HCT116 (cell line): ENCODE measurements at regions of chr11 and their contacts with region 1.

Region 1: GRCh38 chr11:114340311-114341131 is 44.3 kb downstream of the NNMT start:
- DNase-seq: peak; percentile 51
- ATAC-seq: peak; percentile 92
- H3K4me3 ChIP-seq: peak overlapping the region in 1 of 2 experiments; percentile 6; a peak in 1 of 4 replicates
- H3K27ac ChIP-seq: no peak overlapping the region
- H3K4me1 ChIP-seq: peaks cover 0 to 4% of the 10 kb centered on the region in 2 experiments; a peak in 1 of 4 replicates
- H3K27me3 ChIP-seq: no peaks in the 10 kb centered on the region
- CTCF ChIP-seq: peak; percentile 59 to 78 (median 74); a peak in 5 of 6 replicates
- POLR2A ChIP-seq: no peak
- RAD21 ChIP-seq: peak; percentile 83

Region 2: GRCh38 chr11:114466742-114467141 is 126.2 kb after region 1 on chr11:
- CTCF ChIA-PET with region 1: no interaction called
- POLR2A ChIA-PET with region 1: interaction called, 3 read pairs
- RAD21 ChIA-PET with region 1: no interaction called
- intact Hi-C with region 1: loop called (anchors 10 kb)
- DNase-seq: no peak
- ATAC-seq: no peak
- H3K4me3 ChIP-seq: no peak overlapping the region
- H3K27ac ChIP-seq: no peak overlapping the region
- H3K4me1 ChIP-seq: peaks cover 0 to 3% of the 10 kb centered on the region in 2 experiments; a peak in 1 of 4 replicates
- H3K27me3 ChIP-seq: no peaks in the 10 kb centered on the region
- CTCF ChIP-seq: no peak
- POLR2A ChIP-seq: no peak
- RAD21 ChIP-seq: no peak

Region 3: DNA sequence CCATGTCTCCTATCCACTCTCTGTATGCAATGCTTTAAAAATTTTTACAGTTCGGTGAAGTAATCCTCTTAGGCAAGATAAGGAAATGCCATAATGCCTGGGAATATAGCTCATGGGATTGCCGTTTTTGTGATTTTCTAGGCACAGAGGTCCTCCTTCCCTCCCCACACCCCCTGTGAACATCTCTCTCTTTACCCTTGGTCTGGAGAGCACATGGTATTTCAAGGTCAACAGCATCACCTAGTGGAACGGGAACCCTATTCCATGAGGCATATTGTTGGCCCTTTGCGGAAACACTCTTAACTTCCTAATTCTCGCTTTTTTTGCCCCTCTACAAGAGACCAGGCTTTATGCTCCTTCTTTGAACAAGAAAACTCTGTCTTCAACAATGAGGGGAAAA is 246.3 kb after region 1 on chr11:
- CTCF ChIA-PET with region 1: no interaction called
- POLR2A ChIA-PET with region 1: no interaction called
- RAD21 ChIA-PET with region 1: no interaction called
- intact Hi-C with region 1: loop called (anchors 10 kb)
- DNase-seq: no peak
- ATAC-seq: no peak
- H3K4me3 ChIP-seq: no peak overlapping the region
- H3K27ac ChIP-seq: no peak overlapping the region
- H3K4me1 ChIP-seq: no peaks in the 10 kb centered on the region
- H3K27me3 ChIP-seq: no peaks in the 10 kb centered on the region
- CTCF ChIP-seq: peak; percentile 5 to 36 (median 20); a peak in 3 of 6 replicates
- POLR2A ChIP-seq: no peak
- RAD21 ChIP-seq: peak; percentile 54